ENCODE measurements at regions of chr4 and their contacts with region 1.

Region 1: DNA sequence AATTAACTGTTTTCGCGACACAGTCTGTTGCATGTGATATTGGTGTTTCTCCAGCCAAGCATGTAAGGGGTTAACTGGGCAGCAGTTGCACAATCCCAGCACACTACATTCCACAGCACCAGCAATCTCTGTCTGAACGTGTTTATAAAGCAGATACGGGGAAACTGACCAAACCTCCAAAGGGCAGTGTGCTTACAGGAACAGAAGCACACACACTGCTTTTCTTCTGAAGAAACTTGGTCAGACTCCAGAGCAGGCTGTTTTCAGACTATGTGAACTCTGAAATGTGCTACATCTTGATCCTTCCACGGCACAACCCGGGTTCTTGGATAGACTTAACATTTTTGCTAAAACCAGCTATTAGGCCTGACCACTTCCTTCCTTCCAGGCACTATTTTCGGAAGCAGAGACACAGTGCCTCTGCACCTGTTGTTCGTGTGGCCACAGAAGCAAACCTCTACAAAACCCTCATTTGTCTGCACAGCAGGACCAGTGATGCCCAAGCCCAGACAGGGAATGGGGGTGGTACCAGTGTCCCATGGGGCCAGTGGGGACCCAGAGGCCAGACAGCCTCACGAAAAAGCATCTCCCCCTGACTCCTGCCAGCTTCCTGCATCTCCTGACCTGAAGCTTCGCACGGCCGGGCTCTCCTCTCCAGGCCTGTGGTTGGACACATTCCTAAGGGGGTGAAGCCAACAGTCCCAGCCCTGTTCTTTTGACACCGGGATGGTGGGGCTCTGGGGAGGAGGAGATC is 90.1 kb downstream of the IRF2 start:
- DNase-seq: no peak
- ATAC-seq: peak in 7 of 8 donors; percentile 22 to 48 (median 39)
- H3K4me3 ChIP-seq: peak overlapping the region in 8 of 10 donors; percentile 8 to 41 (median 28)
- H3K27ac ChIP-seq: peak overlapping the region; percentile 85 to 95 (median 89)
- H3K4me1 ChIP-seq: peaks cover 32 to 78% (median 67%) of the 10 kb centered on the region in 9 donors
- H3K27me3 ChIP-seq: no peaks in the 10 kb centered on the region
- CTCF ChIP-seq: no peak

Region 2: GRCh38 chr4:184201179-184201578 is 183.1 kb before region 1 on chr4:
- intact Hi-C with region 1: no loop called
- DNase-seq: no peak
- ATAC-seq: no peak
- H3K4me3 ChIP-seq: no peak overlapping the region
- H3K27ac ChIP-seq: no peak overlapping the region
- H3K4me1 ChIP-seq: no peaks in the 10 kb centered on the region
- H3K27me3 ChIP-seq: no peaks in the 10 kb centered on the region
- CTCF ChIP-seq: no peak

Region 3: DNA sequence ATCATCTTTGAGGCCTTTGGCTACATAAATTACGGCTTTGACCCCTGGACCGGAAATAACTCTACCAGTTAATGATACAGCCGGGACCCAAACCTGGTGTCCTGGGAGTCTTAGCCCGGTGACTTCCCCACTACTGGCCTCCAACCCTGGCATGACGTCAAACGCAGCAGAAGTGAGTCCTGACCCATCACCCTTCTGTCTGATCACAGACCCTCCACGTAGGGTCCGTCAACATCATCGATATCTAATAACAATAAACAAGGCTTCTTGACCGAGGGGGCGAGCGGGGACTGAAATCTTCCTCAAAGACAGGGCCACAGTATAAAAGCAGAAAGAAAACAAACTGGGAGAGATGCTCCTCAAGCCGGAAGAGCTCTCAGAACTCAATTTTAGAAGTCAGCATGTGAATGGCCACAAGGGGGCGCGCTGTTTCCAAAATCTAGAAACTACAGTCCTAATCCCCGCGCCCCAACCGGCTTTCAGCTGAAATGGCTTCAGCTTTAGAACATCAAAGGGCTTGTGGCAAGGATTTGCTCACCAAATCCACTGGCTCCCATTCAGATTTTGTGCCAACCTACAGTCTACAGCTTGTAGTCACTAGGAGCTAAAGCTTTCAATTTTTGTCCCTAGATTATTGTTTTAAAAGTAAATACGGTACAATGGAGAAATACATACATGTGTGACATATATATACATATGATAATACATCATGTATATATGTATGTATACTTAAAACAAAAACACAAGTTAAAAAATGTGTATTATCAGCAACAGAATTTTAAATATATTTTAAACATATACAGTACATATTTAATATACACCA is 120.1 kb before region 1 on chr4:
- intact Hi-C with region 1: loop called in 1 of 10 experiments (anchors 10 kb)
- DNase-seq: peak; percentile 90 to 94
- ATAC-seq: peak; percentile 74 to 89 (median 86)
- H3K4me3 ChIP-seq: peak overlapping the region in 2 of 10 donors; percentile 20 to 27
- H3K27ac ChIP-seq: no peak overlapping the region
- H3K4me1 ChIP-seq: peaks cover 0 to 46% (median 7%) of the 10 kb centered on the region in 9 donors
- H3K27me3 ChIP-seq: no peaks in the 10 kb centered on the region
- CTCF ChIP-seq: peak; percentile 88 to 93 (median 91)

Region 4: DNA sequence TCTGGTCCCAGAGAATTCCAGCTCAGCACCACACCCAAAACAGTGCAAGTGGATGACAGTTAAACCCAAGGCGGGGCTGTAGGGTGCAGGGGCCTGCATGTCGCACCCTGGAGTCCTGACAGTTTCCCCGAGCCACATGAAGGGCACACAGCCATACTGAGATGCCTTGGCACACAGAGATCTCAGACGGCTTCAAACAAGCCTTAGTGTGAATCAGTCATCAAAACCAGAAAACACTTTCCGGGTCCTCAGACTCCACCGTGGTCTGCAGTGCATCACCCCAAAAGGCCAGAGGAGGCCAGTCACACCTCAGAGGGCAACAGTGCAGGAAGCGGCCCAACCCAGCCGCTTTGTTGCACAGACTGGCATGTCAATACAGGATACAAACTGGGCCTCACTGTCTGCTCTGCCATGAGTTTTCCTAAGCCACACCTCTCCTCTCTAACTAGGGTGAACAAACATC is 102.0 kb before region 1 on chr4:
- intact Hi-C with region 1: loop called in 1 of 10 experiments (anchors 10 kb)
- DNase-seq: no peak
- ATAC-seq: peak in 5 of 8 donors; percentile 40 to 61 (median 56)
- H3K4me3 ChIP-seq: no peak overlapping the region
- H3K27ac ChIP-seq: peak overlapping the region in 3 of 10 donors; percentile 29 to 56 (median 36)
- H3K4me1 ChIP-seq: peaks cover 0 to 31% (median 19%) of the 10 kb centered on the region in 9 donors
- H3K27me3 ChIP-seq: no peaks in the 10 kb centered on the region
- CTCF ChIP-seq: peak in 3 of 9 donors; percentile 14 to 24 (median 16)

Region 5: DNA sequence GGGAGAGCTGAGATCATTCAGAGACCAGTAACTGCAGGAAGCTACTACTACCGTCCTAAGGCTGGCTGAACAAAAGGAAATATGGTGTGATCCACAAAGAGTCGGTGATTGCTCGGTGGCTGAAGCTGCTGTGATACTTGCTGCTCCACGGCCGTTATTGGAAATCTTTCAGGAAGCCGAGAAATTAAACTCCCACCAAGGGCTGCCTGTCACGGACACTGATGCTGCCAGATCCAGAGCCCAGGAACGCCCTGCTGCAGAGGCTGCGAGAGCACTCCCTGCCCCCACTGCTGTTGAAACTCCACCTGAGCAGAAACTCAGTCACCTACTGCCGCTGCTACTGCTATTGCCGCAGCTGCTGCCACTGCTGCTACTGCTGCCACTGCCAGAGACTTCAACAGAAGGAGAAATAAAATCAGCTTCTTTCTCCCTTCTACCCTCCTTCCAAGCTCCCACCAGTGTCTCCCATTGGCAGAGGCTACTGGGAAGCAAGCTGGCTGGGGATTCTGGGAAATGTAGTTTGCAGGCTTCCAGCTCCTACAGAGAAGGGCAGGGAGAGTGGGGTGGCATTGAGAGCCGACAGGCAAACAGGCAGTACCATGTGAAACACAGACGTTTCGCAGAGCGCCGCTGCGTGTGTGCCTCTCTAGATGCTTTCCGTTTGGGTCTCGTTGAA is 40.6 kb before region 1 on chr4:
- intact Hi-C with region 1: loop called in 6 of 10 experiments (anchors 2 to 5 kb)
- DNase-seq: peak; percentile 54 to 84
- ATAC-seq: peak; percentile 73 to 88 (median 84)
- H3K4me3 ChIP-seq: peak overlapping the region; percentile 33 to 78 (median 60)
- H3K27ac ChIP-seq: peak overlapping the region; percentile 1 to 95 (median 84)
- H3K4me1 ChIP-seq: peaks cover 10 to 76% (median 47%) of the 10 kb centered on the region in 9 donors
- H3K27me3 ChIP-seq: no peaks in the 10 kb centered on the region
- CTCF ChIP-seq: no peak

Region 6: DNA sequence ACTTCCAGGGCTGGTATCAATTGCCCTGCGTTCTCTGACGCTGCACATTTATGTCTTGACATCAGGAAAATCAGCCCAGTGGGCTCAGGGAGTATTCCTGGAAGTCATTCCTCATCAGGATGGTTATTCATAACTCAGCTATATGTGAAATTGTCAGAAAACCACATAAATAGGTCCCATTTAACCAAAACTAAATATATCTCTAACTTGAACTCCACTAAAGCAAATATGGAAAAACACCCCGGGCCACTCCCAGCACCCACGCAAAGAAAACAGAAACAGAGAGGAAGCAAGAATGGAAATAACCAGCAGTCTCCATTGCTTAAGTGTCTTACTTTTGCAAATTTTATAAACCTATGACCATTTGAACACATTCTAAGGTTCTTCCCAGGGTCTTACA is 21.8 kb before region 1 on chr4:
- intact Hi-C with region 1: loop called in 1 of 10 experiments (anchors 2 kb)
- DNase-seq: no peak
- ATAC-seq: peak in 1 of 8 donors; percentile 27
- H3K4me3 ChIP-seq: no peak overlapping the region
- H3K27ac ChIP-seq: peak overlapping the region in 4 of 10 donors; percentile 20 to 57 (median 48)
- H3K4me1 ChIP-seq: peaks cover 0 to 45% (median 10%) of the 10 kb centered on the region in 9 donors
- H3K27me3 ChIP-seq: no peaks in the 10 kb centered on the region
- CTCF ChIP-seq: no peak

Measured in heart right ventricle (tissue), 16 donors.